ENCODE measurements at regions of chr11 and their contacts with region 1.

Region 1: DNA sequence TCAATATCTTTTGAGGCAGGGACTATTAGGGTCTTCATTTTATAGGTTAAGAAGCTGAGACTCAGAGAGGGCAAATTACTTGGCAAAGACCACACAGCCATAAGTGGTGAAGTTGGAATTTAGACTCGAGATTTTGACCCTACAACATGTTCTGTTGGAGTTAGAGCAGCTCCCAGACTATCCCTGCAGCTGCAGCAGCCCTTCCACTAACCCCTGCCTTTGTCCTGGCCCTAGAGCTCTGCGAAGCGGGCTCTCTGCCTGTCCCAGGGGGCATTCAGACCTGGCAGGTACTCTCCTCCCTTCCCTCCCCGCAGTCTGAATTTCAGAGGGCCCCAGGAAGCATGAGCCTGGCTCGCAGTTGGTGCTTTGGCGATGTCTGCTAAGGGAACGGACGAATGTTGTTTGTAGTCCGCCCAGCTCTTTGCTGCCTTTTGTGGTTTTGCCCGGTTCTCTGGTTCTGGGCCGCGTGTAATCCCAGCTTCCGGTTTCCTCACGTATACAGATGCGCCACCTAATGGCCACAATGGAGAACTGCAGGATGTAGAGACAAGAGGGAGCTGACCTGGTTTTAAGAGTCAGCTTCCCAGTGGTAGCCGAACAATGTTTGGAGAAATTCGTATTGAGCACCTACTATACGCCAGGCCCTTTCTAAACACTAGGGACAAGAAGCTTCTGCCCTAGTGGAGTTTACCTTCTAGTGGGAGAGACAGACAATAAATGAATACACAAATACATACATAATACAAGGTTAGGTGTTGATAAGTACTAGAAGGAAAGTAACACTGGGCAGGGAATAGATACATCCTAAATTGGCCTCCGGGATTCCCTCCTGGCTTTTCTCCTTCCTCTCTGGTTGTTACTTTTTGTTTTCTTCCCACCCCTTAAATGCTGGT is 125.2 kb downstream of the ST3GAL4 start:
- DNase-seq: peak; percentile 88

Region 2: GRCh38 chr11:126310228-126310991 is 170.2 kb before region 1 on chr11:
- CTCF ChIA-PET with region 1: interaction called, 17 read pairs
- POLR2A ChIA-PET with region 1: no interaction called
- DNase-seq: peak; percentile 79

Region 3: GRCh38 chr11:126440792-126441514 is 39.7 kb before region 1 on chr11:
- CTCF ChIA-PET with region 1: interaction called, 12 read pairs
- POLR2A ChIA-PET with region 1: no interaction called
- DNase-seq: peak; percentile 93

Region 4: DNA sequence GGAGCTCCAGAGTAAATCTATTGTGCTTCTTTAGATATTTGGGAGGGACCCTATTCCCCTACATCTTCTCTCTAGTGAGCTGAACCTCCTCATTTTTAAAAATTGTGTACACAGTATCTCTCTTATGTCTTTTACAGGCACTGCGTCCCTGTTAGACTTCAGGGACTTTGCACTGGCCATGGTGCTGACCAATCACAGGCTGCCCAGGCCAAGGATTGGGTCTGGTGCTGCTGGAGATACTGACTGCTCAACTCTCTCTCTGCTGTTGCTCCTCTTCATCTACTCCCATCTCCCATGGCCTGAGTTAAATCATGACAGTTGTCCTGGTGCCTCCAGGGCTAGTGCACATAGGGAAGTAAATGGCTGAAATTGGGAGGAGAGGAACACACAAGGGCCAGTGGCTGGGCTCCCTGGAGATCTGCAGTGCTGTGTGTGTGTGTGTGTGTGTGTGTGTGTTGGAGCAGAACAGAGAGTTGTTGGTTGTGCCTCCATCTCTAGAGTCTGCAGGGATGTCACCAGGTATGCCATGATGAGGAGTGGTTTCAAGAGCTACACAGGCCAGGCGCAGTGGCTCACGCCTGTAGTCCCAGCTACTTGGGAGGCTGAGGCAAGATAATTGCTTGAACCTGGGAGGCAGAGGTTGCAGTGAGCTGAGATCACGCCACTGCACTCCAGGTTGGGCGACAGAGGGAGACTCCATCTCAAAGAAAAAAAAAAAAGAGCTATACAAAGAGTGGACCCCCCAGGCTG is 30.1 kb after region 1 on chr11:
- CTCF ChIA-PET with region 1: no interaction called
- POLR2A ChIA-PET with region 1: no interaction called
- DNase-seq: no peak

Region 5: GRCh38 chr11:126585781-126586491 is 105.3 kb after region 1 on chr11:
- CTCF ChIA-PET with region 1: interaction called, 10 read pairs
- POLR2A ChIA-PET with region 1: no interaction called
- DNase-seq: peak; percentile 60